ENCODE measurements at regions of chr16 and their contacts with region 1.

Region 1: GRCh38 chr16:714558-715476 is at the start of gene METRN:
- DNase-seq: peak; percentile 96
- ATAC-seq: peak; percentile 93
- total RNA-seq, gene METRN: 60.4 TPM

Region 2: GRCh38 chr16:740764-741505 is 26.1 kb after region 1 on chr16 and contains the start of gene CIAO3:
- intact Hi-C with region 1: loop called (anchors 2 kb)
- DNase-seq: peak; percentile 95
- ATAC-seq: peak; percentile 91
- total RNA-seq, gene CIAO3: 32.2 TPM

Region 3: GRCh38 chr16:785563-786535 is 71.0 kb after region 1 on chr16:
- intact Hi-C with region 1: loop called (anchors 2 kb)
- DNase-seq: peak; percentile 90
- ATAC-seq: no peak

Region 4: DNA sequence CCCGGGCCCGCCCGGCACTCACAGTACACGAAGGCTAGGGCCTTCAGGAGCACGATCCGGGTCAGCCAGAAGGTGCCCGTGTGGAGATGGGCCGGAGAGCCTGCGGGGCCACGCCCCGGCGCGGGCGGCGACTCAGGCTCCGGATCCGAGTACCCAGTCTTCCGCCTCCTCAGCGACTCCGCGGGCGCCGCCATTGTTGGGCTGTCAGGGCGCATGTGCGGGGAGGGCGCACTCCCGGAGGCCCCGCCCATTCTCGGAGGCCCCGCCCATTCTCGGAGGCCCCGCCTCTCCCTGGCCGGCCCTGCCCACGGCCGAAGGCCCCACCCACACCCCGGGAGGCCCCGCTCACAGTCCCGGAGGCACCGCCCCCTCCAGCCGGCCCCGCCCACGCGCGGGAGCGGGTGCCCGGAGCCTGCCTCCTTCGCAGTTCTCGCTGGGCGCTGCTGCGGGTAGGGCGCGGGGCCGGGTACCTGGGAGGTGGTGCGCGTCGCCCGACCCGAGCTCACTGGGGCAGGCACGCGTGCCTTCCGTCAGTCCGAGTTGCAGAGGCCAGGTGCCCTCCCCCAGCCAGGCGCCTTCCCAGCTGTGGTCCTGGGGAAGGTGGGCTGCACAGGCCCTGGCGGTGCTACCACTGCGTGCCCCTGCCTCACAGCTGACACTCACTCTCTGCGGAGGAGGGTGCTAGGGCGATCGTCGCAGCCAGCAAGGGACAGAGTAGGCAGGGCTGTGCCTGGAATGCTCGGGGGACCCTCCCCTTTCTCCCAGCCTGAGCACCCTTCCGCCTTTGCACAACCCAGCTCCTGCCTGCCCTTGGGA is 256.2 kb after region 1 on chr16 and contains the start of gene LMF1:
- intact Hi-C with region 1: no loop called
- DNase-seq: peak; percentile 97
- ATAC-seq: peak; percentile 99
- total RNA-seq, gene LMF1: 8.1 TPM

Region 5: GRCh38 chr16:1054660-1055556 is 340.1 kb after region 1 on chr16:
- intact Hi-C with region 1: loop called (anchors 1 kb)
- DNase-seq: peak; percentile 44
- ATAC-seq: peak; percentile 75

Measured in Right ventricle myocardium inferior (tissue), 1 donor.